Activated CD8-positive, alpha-beta memory T cell treated with anti-CD3 and anti-CD28 coated beads, Interleukin-2, amount 10 ng/mL, durations not matched to agents 7 days and 5 days (primary cell): ENCODE measurements at regions of chr20 and their contacts with region 1.

Region 1: GRCh38 chr20:47379433-47380150 is 23.1 kb upstream of the ZMYND8 start:
- DNase-seq: no peak
- ATAC-seq: no peak
- H3K4me3 Mint-ChIP-seq: no peak overlapping the region
- H3K27ac Mint-ChIP-seq: peak overlapping the region; percentile 55
- H3K4me1 Mint-ChIP-seq: peaks cover 37% of the 10 kb centered on the region
- H3K27me3 Mint-ChIP-seq: no peaks in the 10 kb centered on the region

Region 2: DNA sequence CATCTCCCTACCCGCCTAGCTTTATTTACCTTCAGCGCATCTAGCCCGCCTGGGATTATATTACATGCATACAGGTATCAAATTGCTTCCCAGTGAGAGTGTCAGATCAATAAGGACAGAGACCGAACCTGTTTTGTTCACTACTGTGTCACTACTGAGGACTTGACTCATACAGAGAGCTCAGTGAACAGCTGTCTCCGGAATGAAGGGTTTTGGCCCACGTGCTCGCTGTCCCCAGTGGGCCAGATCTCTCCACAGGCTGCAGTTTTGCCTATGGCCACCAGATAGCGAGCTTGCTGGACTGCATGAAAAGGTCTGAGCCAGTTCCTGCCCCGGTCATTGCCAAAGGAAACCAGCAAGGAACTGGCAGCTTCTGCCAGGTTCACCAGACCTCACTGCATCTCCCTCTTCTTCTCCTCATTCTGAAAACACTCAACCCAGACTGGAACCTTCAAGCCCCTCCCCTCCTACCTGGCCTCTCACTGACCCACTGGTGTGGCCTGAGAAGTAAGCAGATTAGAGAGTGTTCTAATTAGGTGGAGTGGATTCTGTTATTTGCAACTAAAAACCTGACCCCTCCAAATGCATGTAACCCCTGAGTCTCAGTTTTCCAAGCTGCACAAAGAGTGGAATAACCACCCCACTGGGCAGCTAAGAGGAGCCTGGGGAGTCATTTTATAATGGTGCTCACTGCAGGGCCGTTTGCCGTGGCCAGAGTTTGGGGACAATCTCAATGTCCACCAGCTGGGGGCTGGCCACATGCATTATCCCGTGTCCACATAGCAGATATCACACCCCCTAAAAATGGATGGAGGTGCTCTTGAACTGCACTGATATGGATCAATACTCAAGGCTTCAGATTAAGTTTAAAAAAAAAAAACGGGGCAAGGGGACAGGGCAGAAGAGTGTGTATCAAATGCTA is 173.8 kb before region 1 on chr20:
- CTCF ChIA-PET with region 1: interaction called, 130 read pairs
- DNase-seq: peak; percentile 79
- ATAC-seq: peak; percentile 81
- H3K4me3 Mint-ChIP-seq: no peak overlapping the region
- H3K27ac Mint-ChIP-seq: peak overlapping the region; percentile 5
- H3K4me1 Mint-ChIP-seq: peaks cover 5% of the 10 kb centered on the region
- H3K27me3 Mint-ChIP-seq: no peaks in the 10 kb centered on the region

Region 3: DNA sequence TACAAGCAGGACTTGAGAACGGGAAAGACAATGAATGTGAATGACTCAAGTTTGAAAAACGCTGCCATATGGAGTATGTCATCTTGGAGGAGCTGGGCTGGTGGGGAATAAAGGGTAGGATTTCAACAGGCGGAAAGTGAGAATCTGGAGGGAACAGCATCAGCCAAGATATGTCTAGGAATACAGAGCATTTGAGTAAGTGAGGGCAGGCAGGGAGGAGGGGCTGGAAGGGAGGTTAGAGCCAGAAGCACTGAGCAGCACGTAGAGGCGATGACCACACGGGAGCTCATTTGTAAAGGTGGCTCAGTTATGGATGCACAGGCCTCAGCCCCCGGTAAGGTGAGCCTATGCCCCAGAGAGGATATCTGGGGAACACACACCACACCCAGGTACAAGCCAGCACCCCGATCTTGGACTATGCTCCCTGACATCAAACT is 138.2 kb before region 1 on chr20:
- CTCF ChIA-PET with region 1: interaction called, 18 read pairs
- DNase-seq: no peak
- ATAC-seq: no peak
- H3K4me3 Mint-ChIP-seq: no peak overlapping the region
- H3K27ac Mint-ChIP-seq: no peak overlapping the region
- H3K4me1 Mint-ChIP-seq: no peaks in the 10 kb centered on the region
- H3K27me3 Mint-ChIP-seq: no peaks in the 10 kb centered on the region

Region 4: DNA sequence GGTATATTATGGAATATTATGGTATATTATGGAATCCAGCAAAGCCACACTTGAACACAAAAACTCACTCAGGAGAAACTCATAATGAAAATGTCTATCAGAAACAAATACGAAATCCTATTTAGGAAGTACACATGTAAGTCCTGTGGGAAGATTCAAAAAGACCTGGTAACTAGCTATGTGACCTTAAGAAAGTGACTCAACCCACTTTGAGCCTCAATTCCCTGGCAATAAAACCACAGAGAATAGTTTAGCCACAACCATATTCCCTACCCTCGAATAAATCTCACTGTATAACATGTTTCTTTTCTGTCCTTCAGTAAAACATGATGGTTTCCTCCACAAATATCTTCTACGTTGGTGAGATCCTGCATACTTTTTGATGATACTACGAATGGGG is 79.5 kb before region 1 on chr20:
- CTCF ChIA-PET with region 1: interaction called, 13 read pairs
- DNase-seq: no peak
- ATAC-seq: no peak
- H3K4me3 Mint-ChIP-seq: no peak overlapping the region
- H3K27ac Mint-ChIP-seq: no peak overlapping the region
- H3K4me1 Mint-ChIP-seq: peaks cover 6% of the 10 kb centered on the region
- H3K27me3 Mint-ChIP-seq: no peaks in the 10 kb centered on the region

Region 5: GRCh38 chr20:47356526-47357295 is 22.9 kb before region 1 on chr20 and contains the start of gene ZMYND8:
- CTCF ChIA-PET with region 1: interaction called, 165 read pairs
- DNase-seq: peak; percentile 96
- ATAC-seq: peak; percentile 85
- H3K4me3 Mint-ChIP-seq: peak within 1 kb of the TSS; percentile 87
- H3K27ac Mint-ChIP-seq: peak within 1 kb of the TSS; percentile 99
- H3K4me1 Mint-ChIP-seq: peaks cover 62% of the 10 kb centered on the region
- H3K27me3 Mint-ChIP-seq: no peaks in the 10 kb centered on the region
- total RNA-seq, gene ZMYND8: 39.4 to 45.2 TPM

Region 6: DNA sequence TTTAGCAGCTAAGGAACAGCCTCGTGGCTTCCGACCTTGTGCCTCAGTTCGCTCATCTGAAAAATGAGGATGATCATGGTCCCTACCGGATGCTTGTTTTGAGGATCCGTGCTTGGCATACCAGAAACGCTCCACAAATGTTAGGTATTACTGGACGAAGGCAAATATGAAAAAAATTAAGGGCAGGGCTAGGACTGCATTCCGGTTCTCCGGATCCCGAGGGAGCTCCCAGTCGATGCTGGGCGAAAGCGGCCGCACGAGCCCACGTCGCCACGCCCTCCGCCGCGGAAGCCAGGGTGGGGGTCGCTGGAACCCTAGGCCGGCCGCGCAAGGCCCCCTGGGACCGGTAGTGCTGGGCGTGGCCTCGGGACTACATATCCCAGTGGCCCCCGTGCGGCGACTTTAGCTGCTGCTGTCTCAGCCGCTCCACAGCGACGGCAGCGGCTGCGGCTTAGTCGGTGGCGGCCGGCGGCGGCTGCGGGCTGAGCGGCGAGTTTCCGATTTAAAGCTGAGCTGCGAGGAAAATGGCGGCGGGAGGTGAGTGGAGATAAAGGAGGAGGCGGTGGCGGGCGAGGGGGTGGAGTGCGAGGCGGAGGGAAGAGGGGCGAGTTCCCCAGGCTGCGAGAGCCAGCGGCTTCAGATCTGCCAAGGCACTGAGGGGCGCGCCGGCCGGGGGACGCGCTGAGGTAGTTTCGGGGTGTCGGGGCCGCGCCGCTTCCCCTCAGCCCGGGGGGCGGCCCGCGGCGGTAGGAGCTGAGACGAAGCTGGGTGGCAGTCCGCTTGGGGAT is 122.1 kb after region 1 on chr20 and contains the start of gene NCOA3:
- CTCF ChIA-PET with region 1: interaction called, 15 read pairs
- DNase-seq: peak; percentile 97
- ATAC-seq: peak; percentile 83
- H3K4me3 Mint-ChIP-seq: peak within 1 kb of the TSS; percentile 96
- H3K27ac Mint-ChIP-seq: peak within 1 kb of the TSS; percentile 91
- H3K4me1 Mint-ChIP-seq: peaks cover 57% of the 10 kb centered on the region
- H3K27me3 Mint-ChIP-seq: peaks cover 2% of the 10 kb centered on the region
- total RNA-seq, gene NCOA3: 74.9 to 75.8 TPM